ENCODE measurements at regions of chr12 and their contacts with region 1.

Region 1: DNA sequence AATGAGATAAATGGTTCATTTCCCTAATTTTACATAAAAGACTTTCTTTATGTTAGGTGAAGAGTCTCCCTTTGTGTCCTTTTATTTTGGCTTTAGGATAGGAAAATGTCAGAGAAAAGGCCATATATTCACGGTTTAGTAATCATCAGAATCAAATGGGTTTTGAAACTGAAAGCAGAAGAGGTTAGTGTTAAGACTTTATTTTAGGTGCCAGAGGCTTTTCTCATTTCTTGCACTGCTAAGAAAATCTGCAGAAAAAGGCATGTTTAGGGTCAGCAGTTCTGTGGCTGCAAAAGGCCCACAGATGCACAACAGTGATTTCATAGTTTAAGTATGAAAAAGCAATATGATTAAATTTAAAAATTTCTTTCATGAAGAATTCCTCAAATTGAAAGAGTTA is 80.4 kb upstream of the SINHCAF start:
- DNase-seq: no peak
- H3K4me3 ChIP-seq: no peak overlapping the region
- H3K4me3 Mint-ChIP-seq: no peak overlapping the region
- H3K27ac ChIP-seq: no peak overlapping the region
- H3K27ac Mint-ChIP-seq: no peak overlapping the region
- H3K4me1 ChIP-seq: no peaks in the 10 kb centered on the region
- H3K4me1 Mint-ChIP-seq: peaks cover 0 to 3% (median 0%) of the 10 kb centered on the region in 4 donors
- H3K27me3 ChIP-seq: no peaks in the 10 kb centered on the region
- H3K27me3 Mint-ChIP-seq: peaks cover 4 to 12% of the 10 kb centered on the region in 2 donors

Region 2: DNA sequence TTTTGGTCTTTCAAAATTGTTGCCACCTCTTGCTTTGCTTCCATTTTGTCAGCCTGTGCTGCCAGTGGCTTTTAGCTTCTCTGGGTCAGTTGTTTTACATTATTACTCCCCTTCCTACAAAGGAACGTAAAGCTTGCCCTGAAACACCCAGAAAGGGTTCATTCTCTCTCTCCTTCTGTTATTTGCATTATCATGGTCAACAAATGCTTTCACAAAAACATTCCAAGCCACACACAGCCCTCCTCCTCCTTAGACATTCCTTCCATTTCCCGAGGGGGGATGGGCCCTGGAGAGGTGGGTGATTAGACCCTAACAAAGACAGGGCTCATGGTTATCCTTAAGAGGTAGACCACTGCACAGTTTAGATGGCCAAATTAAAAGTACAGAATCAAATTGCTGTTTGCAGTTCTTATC is 20.0 kb before region 1 on chr12:
- CTCF ChIA-PET with region 1: interaction called, 13 read pairs
- POLR2A ChIA-PET with region 1: no interaction called
- intact Hi-C with region 1: no loop called
- DNase-seq: no peak
- H3K4me3 ChIP-seq: no peak overlapping the region
- H3K4me3 Mint-ChIP-seq: no peak overlapping the region
- H3K27ac ChIP-seq: no peak overlapping the region
- H3K27ac Mint-ChIP-seq: no peak overlapping the region
- H3K4me1 ChIP-seq: no peaks in the 10 kb centered on the region
- H3K4me1 Mint-ChIP-seq: no peaks in the 10 kb centered on the region
- H3K27me3 ChIP-seq: no peaks in the 10 kb centered on the region
- H3K27me3 Mint-ChIP-seq: peaks cover 6 to 9% of the 10 kb centered on the region in 2 donors

Region 3: GRCh38 chr12:31631784-31632183 is 225.4 kb after region 1 on chr12:
- CTCF ChIA-PET with region 1: interaction called, 7 read pairs
- POLR2A ChIA-PET with region 1: no interaction called
- intact Hi-C with region 1: loop called (anchors 1 kb)
- DNase-seq: no peak
- H3K4me3 ChIP-seq: no peak overlapping the region
- H3K4me3 Mint-ChIP-seq: no peak overlapping the region
- H3K27ac ChIP-seq: no peak overlapping the region
- H3K27ac Mint-ChIP-seq: peak overlapping the region in 1 of 7 donors; percentile 48
- H3K4me1 ChIP-seq: no peaks in the 10 kb centered on the region
- H3K4me1 Mint-ChIP-seq: peaks cover 0 to 3% (median 1%) of the 10 kb centered on the region in 4 donors
- H3K27me3 ChIP-seq: no peaks in the 10 kb centered on the region
- H3K27me3 Mint-ChIP-seq: peaks cover under 1 to 5% of the 10 kb centered on the region in 2 donors

Region 4: DNA sequence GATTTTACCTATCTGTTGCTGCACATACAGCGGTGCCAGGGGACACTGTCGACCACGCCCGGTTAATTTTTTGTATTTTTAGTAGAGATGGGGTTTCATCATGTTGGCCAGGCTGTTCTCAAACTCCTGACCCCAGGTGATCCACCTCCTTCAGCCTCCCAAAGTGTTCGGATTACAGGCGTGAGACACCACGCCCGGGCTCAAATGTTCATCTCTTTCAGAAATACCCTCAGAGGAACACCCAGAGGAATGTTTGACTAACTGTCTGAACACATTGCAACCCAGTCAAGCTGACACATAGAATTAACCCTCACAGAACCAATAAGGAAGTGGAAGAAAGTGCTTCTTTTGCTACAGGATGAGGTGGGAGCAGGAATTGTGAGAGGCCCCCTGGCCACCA is 238.2 kb after region 1 on chr12:
- CTCF ChIA-PET with region 1: interaction called, 14 read pairs
- POLR2A ChIA-PET with region 1: no interaction called
- intact Hi-C with region 1: no loop called
- DNase-seq: no peak
- H3K4me3 ChIP-seq: no peak overlapping the region
- H3K4me3 Mint-ChIP-seq: no peak overlapping the region
- H3K27ac ChIP-seq: no peak overlapping the region
- H3K27ac Mint-ChIP-seq: no peak overlapping the region
- H3K4me1 ChIP-seq: no peaks in the 10 kb centered on the region
- H3K4me1 Mint-ChIP-seq: no peaks in the 10 kb centered on the region
- H3K27me3 ChIP-seq: no peaks in the 10 kb centered on the region
- H3K27me3 Mint-ChIP-seq: peaks cover 0 to 4% of the 10 kb centered on the region in 2 donors

Region 5: GRCh38 chr12:31650927-31651326 is 244.6 kb after region 1 on chr12:
- CTCF ChIA-PET with region 1: interaction called, 11 read pairs
- POLR2A ChIA-PET with region 1: no interaction called
- intact Hi-C with region 1: no loop called
- DNase-seq: no peak
- H3K4me3 ChIP-seq: no peak overlapping the region
- H3K4me3 Mint-ChIP-seq: no peak overlapping the region
- H3K27ac ChIP-seq: no peak overlapping the region
- H3K27ac Mint-ChIP-seq: no peak overlapping the region
- H3K4me1 ChIP-seq: peaks cover 12% of the 10 kb centered on the region
- H3K4me1 Mint-ChIP-seq: peaks cover 6 to 12% (median 7%) of the 10 kb centered on the region in 4 donors
- H3K27me3 ChIP-seq: no peaks in the 10 kb centered on the region
- H3K27me3 Mint-ChIP-seq: peaks cover 0 to 2% of the 10 kb centered on the region in 2 donors

Region 6: GRCh38 chr12:32302218-32303173 is 896.2 kb after region 1 on chr12:
- CTCF ChIA-PET with region 1: interaction called, 8 read pairs
- POLR2A ChIA-PET with region 1: no interaction called
- intact Hi-C with region 1: loop called (anchors 2 kb)
- DNase-seq: peak in 4 of 5 donors; percentile 6 to 18 (median 8)
- H3K4me3 ChIP-seq: no peak overlapping the region
- H3K4me3 Mint-ChIP-seq: no peak overlapping the region
- H3K27ac ChIP-seq: no peak overlapping the region
- H3K27ac Mint-ChIP-seq: peak overlapping the region in 2 of 7 donors; percentile 20 to 29
- H3K4me1 ChIP-seq: no peaks in the 10 kb centered on the region
- H3K4me1 Mint-ChIP-seq: peaks cover 0 to 4% (median under 1%) of the 10 kb centered on the region in 4 donors
- H3K27me3 ChIP-seq: no peaks in the 10 kb centered on the region
- H3K27me3 Mint-ChIP-seq: no peaks in the 10 kb centered on the region

Region 7: DNA sequence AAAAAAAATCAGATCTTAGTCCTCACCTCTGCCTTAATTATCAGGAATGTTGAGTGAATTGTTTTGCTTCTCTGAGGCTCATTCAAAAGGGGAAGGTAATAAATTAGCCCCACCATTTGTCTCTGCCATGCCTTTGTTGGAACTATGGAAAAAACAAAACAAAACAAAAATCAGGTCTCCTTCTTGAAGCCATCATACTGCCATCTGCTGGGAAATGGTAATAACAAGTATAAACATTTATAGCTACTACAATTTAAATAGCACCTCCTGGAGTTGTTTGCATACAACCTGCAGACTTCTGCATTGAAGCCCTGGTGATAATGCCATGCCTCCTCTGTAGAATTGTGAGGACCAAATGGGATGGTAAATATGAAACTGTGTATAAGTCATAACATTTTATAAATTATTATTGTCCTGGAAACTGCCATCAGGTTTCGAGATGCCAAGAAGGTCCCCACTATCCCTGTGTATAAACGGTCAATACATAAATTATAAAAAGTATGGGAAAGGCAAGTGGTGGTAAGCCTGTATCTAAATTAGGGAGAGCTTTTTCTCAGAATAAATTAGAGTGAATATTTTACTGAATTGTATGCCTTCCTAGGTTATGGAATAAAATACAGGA is 905.8 kb after region 1 on chr12:
- CTCF ChIA-PET with region 1: interaction called, 15 read pairs
- POLR2A ChIA-PET with region 1: no interaction called
- intact Hi-C with region 1: loop called (anchors 1 kb)
- DNase-seq: peak in 4 of 5 donors; percentile 31 to 52 (median 38)
- H3K4me3 ChIP-seq: no peak overlapping the region
- H3K4me3 Mint-ChIP-seq: peak overlapping the region in 2 of 8 donors; percentile 14 to 65
- H3K27ac ChIP-seq: no peak overlapping the region
- H3K27ac Mint-ChIP-seq: peak overlapping the region in 1 of 7 donors; percentile 87
- H3K4me1 ChIP-seq: no peaks in the 10 kb centered on the region
- H3K4me1 Mint-ChIP-seq: peaks cover 3 to 9% (median 4%) of the 10 kb centered on the region in 4 donors
- H3K27me3 ChIP-seq: no peaks in the 10 kb centered on the region
- H3K27me3 Mint-ChIP-seq: no peaks in the 10 kb centered on the region

Measured in CD4-positive, alpha-beta memory T cell (primary cell).